ENCODE measurements at regions of chr12 and their contacts with region 1.

Region 1: DNA sequence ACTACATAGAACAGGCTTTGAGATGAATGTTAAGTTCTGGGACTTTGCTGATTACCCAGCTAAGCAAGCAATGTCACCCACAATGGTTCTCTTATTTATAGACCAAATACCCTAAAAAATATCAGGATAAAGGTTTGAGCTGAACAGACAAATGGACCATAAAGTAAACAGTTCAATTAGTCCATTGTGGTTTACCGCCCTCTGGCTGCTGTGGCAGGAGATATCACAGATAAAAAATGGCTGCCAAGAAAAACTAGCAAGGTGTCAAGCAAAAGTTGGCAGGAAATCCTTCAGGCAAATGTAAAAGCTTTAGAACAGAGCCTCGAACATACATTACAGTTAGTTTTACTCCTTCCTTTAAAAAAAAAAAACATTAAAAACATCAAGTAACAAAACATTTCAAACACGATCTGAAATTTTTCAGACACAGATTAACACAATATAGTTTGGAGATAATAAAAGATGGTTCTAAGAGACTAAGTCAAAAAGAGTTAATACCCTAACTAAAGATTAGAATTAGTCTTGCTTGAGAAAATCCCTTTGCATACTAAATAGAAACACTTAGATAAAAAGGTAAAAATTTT is 41.3 kb downstream of the MED13L start:
- DNase-seq: peak; percentile 16
- ATAC-seq: peak; percentile 82
- H3K4me3 ChIP-seq: no peak overlapping the region
- H3K27ac ChIP-seq: no peak overlapping the region
- H3K4me1 ChIP-seq: no peaks in the 10 kb centered on the region
- H3K27me3 ChIP-seq: no peaks in the 10 kb centered on the region
- CTCF ChIP-seq: peak; percentile 55 to 82 (median 63); a peak in 5 of 6 replicates
- EP300 ChIP-seq: no peak
- POLR2A ChIP-seq: no peak
- RAD21 ChIP-seq: peak; percentile 90

Region 2: DNA sequence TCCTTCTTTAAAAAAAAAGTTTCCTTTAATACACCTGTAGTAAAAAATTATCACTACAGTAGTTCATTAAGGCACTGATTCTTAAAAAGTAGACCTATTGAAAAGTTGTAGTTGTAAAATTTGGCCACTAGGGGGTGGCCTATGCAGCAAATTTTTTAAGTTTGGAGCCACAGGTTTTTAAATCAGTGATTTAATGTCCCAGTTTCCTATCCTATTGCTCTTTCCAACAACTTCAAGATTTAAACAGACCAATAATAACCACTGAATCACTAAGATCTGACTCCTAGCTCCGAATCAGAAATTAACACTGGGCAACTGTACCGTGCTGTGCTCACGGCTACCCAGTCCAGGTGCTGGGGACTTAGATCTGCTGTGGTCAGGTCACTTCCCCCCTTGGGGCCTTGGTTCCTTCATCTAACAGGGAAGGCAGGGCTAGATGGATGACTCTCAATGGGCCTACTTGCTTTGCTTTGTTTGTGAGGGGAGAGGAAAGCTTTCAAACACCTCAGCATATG is 238.1 kb before region 1 on chr12:
- CTCF ChIA-PET with region 1: interaction called, 34 read pairs
- POLR2A ChIA-PET with region 1: no interaction called
- RAD21 ChIA-PET with region 1: interaction called, 9 read pairs
- SMC1A ChIA-PET with region 1: interaction called, 6 read pairs
- in situ Hi-C with region 1: no loop called
- intact Hi-C with region 1: loop called (anchors 1 kb)
- DNase-seq: no peak
- ATAC-seq: peak; percentile 68
- H3K4me3 ChIP-seq: no peak overlapping the region
- H3K27ac ChIP-seq: no peak overlapping the region
- H3K4me1 ChIP-seq: peaks cover 3% of the 10 kb centered on the region
- H3K27me3 ChIP-seq: no peaks in the 10 kb centered on the region
- CTCF ChIP-seq: peak; percentile 56 to 65 (median 64)
- EP300 ChIP-seq: no peak
- POLR2A ChIP-seq: no peak
- RAD21 ChIP-seq: peak; percentile 59

Region 3: GRCh38 chr12:116015525-116015924 is 220.7 kb before region 1 on chr12:
- CTCF ChIA-PET with region 1: interaction called, 22 read pairs
- POLR2A ChIA-PET with region 1: no interaction called
- RAD21 ChIA-PET with region 1: interaction called, 10 read pairs
- SMC1A ChIA-PET with region 1: interaction called, 13 read pairs
- in situ Hi-C with region 1: no loop called
- intact Hi-C with region 1: loop called (anchors 2 kb)
- DNase-seq: no peak
- ATAC-seq: peak; percentile 84
- H3K4me3 ChIP-seq: no peak overlapping the region
- H3K27ac ChIP-seq: no peak overlapping the region
- H3K4me1 ChIP-seq: no peaks in the 10 kb centered on the region
- H3K27me3 ChIP-seq: no peaks in the 10 kb centered on the region
- CTCF ChIP-seq: peak; percentile 36 to 55 (median 38); a peak in 4 of 6 replicates
- EP300 ChIP-seq: no peak
- POLR2A ChIP-seq: no peak
- RAD21 ChIP-seq: peak; percentile 85

Region 4: DNA sequence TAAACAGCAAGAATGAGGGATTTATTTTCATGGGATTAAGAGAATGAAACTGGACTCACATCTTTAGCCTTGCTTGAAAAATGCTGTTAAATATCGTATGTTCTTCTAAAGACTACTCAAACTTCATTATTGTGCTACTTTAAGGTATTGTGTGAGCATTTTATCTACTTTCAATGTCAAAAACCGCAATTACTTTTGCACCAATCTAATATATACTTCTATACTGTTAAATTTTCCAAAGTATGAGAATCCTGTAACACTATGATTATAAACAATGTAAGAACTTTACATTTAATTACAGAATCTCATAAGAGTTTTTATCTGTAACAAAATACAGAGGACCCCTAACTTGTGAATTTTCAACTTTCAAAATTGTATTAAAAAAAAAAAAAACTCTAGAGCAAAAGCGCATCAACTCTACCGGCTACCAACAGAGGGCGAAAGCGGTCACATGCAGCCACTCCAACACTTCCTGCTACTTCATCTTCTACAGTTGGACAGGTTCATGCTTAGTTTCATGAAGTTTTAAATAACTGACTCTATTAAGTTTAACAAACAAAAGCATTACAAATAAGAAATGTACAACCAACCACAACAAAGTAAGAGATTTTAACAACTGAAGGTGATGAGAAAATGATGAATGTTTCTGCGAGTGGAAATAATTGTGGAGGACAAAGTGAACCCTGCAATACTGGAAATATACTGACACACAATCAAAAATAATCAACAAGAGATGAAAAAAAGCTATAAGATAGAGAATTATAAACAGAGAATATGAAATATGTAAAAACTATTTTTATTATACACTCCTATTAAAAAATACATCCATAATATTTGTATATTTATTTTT is 169.6 kb before region 1 on chr12:
- CTCF ChIA-PET with region 1: interaction called, 14 read pairs
- POLR2A ChIA-PET with region 1: no interaction called
- RAD21 ChIA-PET with region 1: interaction called, 4 read pairs
- SMC1A ChIA-PET with region 1: interaction called, 6 read pairs
- in situ Hi-C with region 1: no loop called
- intact Hi-C with region 1: no loop called
- DNase-seq: no peak
- ATAC-seq: peak; percentile 84
- H3K4me3 ChIP-seq: no peak overlapping the region
- H3K27ac ChIP-seq: no peak overlapping the region
- H3K4me1 ChIP-seq: no peaks in the 10 kb centered on the region
- H3K27me3 ChIP-seq: no peaks in the 10 kb centered on the region
- CTCF ChIP-seq: peak; percentile 77 to 89 (median 87)
- EP300 ChIP-seq: no peak
- POLR2A ChIP-seq: no peak
- RAD21 ChIP-seq: peak; percentile 72

Region 5: DNA sequence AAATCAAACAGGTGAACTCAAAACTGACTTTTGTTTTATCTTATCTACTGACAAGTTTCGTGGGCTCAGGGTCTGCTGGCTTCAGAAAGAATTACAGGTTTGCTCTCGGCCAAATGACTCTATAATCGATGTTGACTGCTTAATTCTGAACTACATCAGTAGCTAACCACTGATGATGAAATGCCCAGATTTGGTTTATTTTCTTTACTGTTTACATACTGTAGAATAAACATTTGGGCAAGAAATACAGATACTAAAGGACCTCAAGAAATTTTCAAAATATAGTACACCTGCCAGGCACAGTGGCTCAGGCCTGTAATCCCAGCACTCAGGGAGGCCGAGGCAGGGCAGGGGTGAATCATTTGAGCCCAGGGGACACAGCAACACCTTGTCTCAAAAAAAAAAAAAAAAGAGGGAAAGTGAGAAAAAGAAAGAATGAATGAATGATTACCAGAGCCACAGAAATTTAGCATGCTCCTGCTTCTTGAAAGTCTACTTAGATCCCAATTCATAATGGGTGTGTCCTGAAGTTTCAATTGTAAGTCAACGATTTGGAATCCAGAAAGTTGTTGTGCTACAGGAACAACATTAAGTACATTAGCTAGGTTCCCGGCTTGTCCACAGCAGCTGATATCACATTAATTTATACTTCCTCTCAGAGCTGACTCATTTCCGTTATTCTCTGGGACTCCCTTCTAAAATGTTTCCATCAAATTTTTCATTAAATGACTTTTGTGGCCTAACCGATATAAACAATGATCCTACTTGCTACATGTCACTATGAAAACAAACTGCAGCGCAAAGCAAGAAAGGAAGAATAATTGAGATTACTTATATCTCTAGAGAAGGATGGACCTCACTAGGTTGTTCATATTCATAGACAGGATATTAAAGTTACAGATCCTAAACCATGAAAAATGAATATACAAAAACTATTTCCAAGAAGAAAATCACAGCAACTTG is 93.0 kb before region 1 on chr12:
- CTCF ChIA-PET with region 1: interaction called, 26 read pairs
- POLR2A ChIA-PET with region 1: no interaction called
- RAD21 ChIA-PET with region 1: interaction called, 31 read pairs
- SMC1A ChIA-PET with region 1: interaction called, 19 read pairs
- in situ Hi-C with region 1: no loop called
- intact Hi-C with region 1: loop called (anchors 2 kb)
- DNase-seq: no peak
- ATAC-seq: peak; percentile 67
- H3K4me3 ChIP-seq: no peak overlapping the region
- H3K27ac ChIP-seq: no peak overlapping the region
- H3K4me1 ChIP-seq: peaks cover 19% of the 10 kb centered on the region
- H3K27me3 ChIP-seq: no peaks in the 10 kb centered on the region
- CTCF ChIP-seq: no peak
- EP300 ChIP-seq: no peak; a peak in 1 of 4 replicates
- POLR2A ChIP-seq: no peak
- RAD21 ChIP-seq: no peak

Region 6: DNA sequence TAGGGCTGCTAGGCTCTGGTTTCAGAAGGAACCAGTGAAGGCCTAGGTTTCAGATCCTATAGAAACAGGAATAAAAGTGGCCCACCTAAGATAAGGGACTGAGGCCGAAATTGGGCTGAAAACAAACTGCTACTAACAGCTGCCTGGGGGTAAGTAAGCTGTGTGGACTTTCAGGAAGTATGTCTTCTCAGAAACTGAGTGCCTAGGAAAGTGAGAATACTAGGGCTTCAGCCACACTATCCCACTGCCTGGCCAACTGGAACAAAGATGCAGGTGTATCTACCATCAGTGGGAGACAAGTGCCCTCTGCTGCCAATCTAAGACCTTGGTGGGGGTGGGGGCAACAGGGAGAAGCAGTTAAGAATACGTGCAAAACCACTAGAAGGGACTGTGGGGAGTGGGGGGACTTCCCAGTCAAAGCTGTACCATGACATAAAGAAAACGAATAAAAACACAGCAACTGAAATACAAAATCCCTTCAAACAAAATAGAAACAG is 41.3 kb before region 1 on chr12:
- CTCF ChIA-PET with region 1: interaction called, 18 read pairs
- POLR2A ChIA-PET with region 1: no interaction called
- RAD21 ChIA-PET with region 1: interaction called, 3 read pairs
- SMC1A ChIA-PET with region 1: interaction called, 9 read pairs
- in situ Hi-C with region 1: no loop called
- intact Hi-C with region 1: no loop called
- DNase-seq: peak; percentile 79
- ATAC-seq: peak; percentile 89
- H3K4me3 ChIP-seq: peak overlapping the region; percentile 52
- H3K27ac ChIP-seq: peak overlapping the region; percentile 83
- H3K4me1 ChIP-seq: peaks cover 22% of the 10 kb centered on the region; the same call in 1 of the 2 replicates
- H3K27me3 ChIP-seq: no peaks in the 10 kb centered on the region
- CTCF ChIP-seq: peak; percentile 11 to 54 (median 24); a peak in 3 of 6 replicates
- EP300 ChIP-seq: peak; percentile 74 to 88; a peak in 3 of 4 replicates
- POLR2A ChIP-seq: no peak
- RAD21 ChIP-seq: peak; percentile 71

Region 7: GRCh38 chr12:116226026-116226425 is 10.2 kb before region 1 on chr12:
- CTCF ChIA-PET with region 1: interaction called, 31 read pairs
- POLR2A ChIA-PET with region 1: no interaction called
- RAD21 ChIA-PET with region 1: no interaction called
- SMC1A ChIA-PET with region 1: interaction called, 8 read pairs
- in situ Hi-C with region 1: no loop called
- intact Hi-C with region 1: no loop called
- DNase-seq: no peak
- ATAC-seq: no peak
- H3K4me3 ChIP-seq: no peak overlapping the region
- H3K27ac ChIP-seq: no peak overlapping the region
- H3K4me1 ChIP-seq: no peaks in the 10 kb centered on the region
- H3K27me3 ChIP-seq: no peaks in the 10 kb centered on the region
- CTCF ChIP-seq: no peak
- EP300 ChIP-seq: no peak
- POLR2A ChIP-seq: no peak
- RAD21 ChIP-seq: no peak

Region 8: GRCh38 chr12:116369921-116370404 is 133.7 kb after region 1 on chr12:
- CTCF ChIA-PET with region 1: no interaction called
- POLR2A ChIA-PET with region 1: no interaction called
- RAD21 ChIA-PET with region 1: no interaction called
- SMC1A ChIA-PET with region 1: no interaction called
- in situ Hi-C with region 1: no loop called
- intact Hi-C with region 1: no loop called
- DNase-seq: no peak
- ATAC-seq: no peak
- H3K4me3 ChIP-seq: no peak overlapping the region
- H3K27ac ChIP-seq: no peak overlapping the region
- H3K4me1 ChIP-seq: no peaks in the 10 kb centered on the region
- H3K27me3 ChIP-seq: no peaks in the 10 kb centered on the region
- CTCF ChIP-seq: no peak
- EP300 ChIP-seq: no peak
- POLR2A ChIP-seq: no peak
- RAD21 ChIP-seq: no peak